B cell (primary cell): ENCODE measurements at regions of chr7 and their contacts with region 1.

Region 1: DNA sequence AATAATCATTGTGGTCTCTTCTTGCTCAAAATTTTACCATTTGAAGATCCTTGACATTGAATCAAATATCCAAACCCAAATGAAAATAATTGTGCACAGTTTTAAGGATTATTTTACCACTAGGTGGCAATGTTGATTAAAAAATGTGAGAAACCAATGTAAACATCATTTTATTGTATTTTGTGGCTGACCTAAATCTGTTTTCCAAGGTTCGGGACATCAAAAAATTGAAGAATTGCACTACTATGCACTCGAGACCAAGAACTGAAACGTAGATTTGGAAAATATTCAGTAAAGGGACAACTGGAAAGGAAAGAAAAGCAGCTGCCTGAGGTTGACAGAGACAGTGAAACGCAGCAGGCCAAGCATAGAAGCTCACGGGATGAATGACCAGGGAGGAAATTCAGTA is 259.3 kb downstream of the SNX13 start:
- DNase-seq: peak; percentile 41
- ATAC-seq: no peak
- H3K4me3 ChIP-seq: no peak overlapping the region
- H3K4me3 Mint-ChIP-seq: no peak overlapping the region
- H3K27ac ChIP-seq: no peak overlapping the region
- H3K27ac Mint-ChIP-seq: no peak overlapping the region
- H3K4me1 ChIP-seq: no peaks in the 10 kb centered on the region
- H3K4me1 Mint-ChIP-seq: no peaks in the 10 kb centered on the region
- H3K27me3 ChIP-seq: no peaks in the 10 kb centered on the region
- H3K27me3 Mint-ChIP-seq: no peaks in the 10 kb centered on the region
- CTCF ChIP-seq: peak; percentile 84

Region 2: DNA sequence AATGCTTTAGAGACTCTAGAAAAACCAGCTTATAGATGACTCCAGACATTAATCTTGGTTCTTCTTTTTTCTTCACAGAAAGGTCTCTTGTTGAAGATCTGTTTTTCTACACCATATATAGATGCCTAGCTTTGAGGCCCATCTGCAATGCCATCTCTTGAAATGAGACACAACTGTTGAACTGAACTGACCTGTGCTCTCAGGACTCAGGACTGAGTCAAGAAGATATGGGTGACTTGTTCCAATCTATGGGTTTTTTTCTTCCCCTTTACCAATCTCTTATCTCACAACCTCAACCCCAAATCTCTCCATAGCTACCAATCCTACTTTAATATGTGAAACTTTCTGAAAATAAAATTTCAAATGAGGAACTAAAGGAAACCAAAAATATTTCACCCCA is 64.7 kb after region 1 on chr7:
- CTCF ChIA-PET with region 1: no interaction called
- POLR2A ChIA-PET with region 1: no interaction called
- intact Hi-C with region 1: no loop called
- DNase-seq: no peak
- ATAC-seq: no peak
- H3K4me3 ChIP-seq: no peak overlapping the region
- H3K4me3 Mint-ChIP-seq: no peak overlapping the region
- H3K27ac ChIP-seq: no peak overlapping the region
- H3K27ac Mint-ChIP-seq: no peak overlapping the region
- H3K4me1 ChIP-seq: no peaks in the 10 kb centered on the region
- H3K4me1 Mint-ChIP-seq: peaks cover 10% of the 10 kb centered on the region
- H3K27me3 ChIP-seq: no peaks in the 10 kb centered on the region
- H3K27me3 Mint-ChIP-seq: no peaks in the 10 kb centered on the region
- CTCF ChIP-seq: no peak

Region 3: DNA sequence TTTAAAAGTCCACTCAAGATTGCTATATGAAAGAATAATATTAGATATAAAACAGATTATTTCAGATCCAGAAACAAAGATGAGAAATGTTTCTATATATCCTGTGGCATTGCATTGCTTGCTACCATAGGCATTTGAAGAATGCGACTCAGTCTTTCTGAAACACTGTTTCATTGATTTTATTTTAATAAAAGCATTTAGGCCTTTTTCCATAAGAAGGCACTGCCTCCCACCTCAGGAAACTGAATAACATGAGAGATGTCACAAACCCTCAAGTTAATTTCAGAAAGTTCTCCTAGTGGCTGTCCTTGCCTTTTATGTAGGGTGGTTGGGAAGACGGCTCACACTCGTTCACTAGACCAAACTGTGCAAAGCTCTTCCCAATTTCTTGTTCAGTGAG is 323.4 kb after region 1 on chr7:
- CTCF ChIA-PET with region 1: no interaction called
- POLR2A ChIA-PET with region 1: no interaction called
- intact Hi-C with region 1: no loop called
- DNase-seq: no peak
- ATAC-seq: no peak
- H3K4me3 ChIP-seq: no peak overlapping the region
- H3K4me3 Mint-ChIP-seq: no peak overlapping the region
- H3K27ac ChIP-seq: no peak overlapping the region
- H3K27ac Mint-ChIP-seq: no peak overlapping the region
- H3K4me1 ChIP-seq: no peaks in the 10 kb centered on the region
- H3K4me1 Mint-ChIP-seq: no peaks in the 10 kb centered on the region
- H3K27me3 ChIP-seq: no peaks in the 10 kb centered on the region
- H3K27me3 Mint-ChIP-seq: no peaks in the 10 kb centered on the region
- CTCF ChIP-seq: no peak

Region 4: DNA sequence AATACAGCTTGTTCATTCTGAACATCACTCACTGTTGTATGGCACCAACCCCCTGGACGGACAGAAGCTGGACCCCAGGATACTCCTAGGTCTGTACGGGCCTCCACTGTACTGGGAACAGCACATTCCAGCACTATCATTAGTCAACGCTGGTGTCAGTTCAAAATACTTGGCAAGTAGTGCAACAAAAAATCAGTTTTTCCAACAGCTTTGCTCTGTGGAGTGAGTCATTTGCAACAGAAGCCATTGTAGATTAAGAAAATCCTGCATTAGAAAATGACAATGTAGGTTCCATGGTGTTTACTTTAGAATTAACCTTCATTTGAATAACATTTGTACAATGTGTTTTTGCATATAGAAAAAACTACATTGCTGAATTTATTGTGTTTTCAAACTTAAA is 1081.2 kb after region 1 on chr7:
- CTCF ChIA-PET with region 1: no interaction called
- POLR2A ChIA-PET with region 1: no interaction called
- intact Hi-C with region 1: no loop called
- DNase-seq: no peak
- ATAC-seq: no peak
- H3K4me3 ChIP-seq: no peak overlapping the region
- H3K4me3 Mint-ChIP-seq: no peak overlapping the region
- H3K27ac ChIP-seq: no peak overlapping the region
- H3K27ac Mint-ChIP-seq: no peak overlapping the region
- H3K4me1 ChIP-seq: no peaks in the 10 kb centered on the region
- H3K4me1 Mint-ChIP-seq: no peaks in the 10 kb centered on the region
- H3K27me3 ChIP-seq: no peaks in the 10 kb centered on the region
- H3K27me3 Mint-ChIP-seq: no peaks in the 10 kb centered on the region
- CTCF ChIP-seq: no peak

Region 5: GRCh38 chr7:19051767-19052375 is 1370.9 kb after region 1 on chr7:
- CTCF ChIA-PET with region 1: no interaction called
- POLR2A ChIA-PET with region 1: no interaction called
- intact Hi-C with region 1: loop called (anchors 2 kb)
- DNase-seq: peak; percentile 40
- ATAC-seq: peak; percentile 69
- H3K4me3 ChIP-seq: no peak overlapping the region
- H3K4me3 Mint-ChIP-seq: no peak overlapping the region
- H3K27ac ChIP-seq: no peak overlapping the region
- H3K27ac Mint-ChIP-seq: no peak overlapping the region
- H3K4me1 ChIP-seq: no peaks in the 10 kb centered on the region
- H3K4me1 Mint-ChIP-seq: no peaks in the 10 kb centered on the region
- H3K27me3 ChIP-seq: peaks cover 0 to 2% (median 0%) of the 10 kb centered on the region in 4 experiments
- H3K27me3 Mint-ChIP-seq: peaks cover 17% of the 10 kb centered on the region
- CTCF ChIP-seq: peak; percentile 90